ENCODE measurements at regions of chr17 and their contacts with region 1.

Region 1: GRCh38 chr17:37339321-37339720 is 36.5 kb upstream of the C17orf78 start:
- DNase-seq: no peak
- H3K4me3 ChIP-seq: no peak overlapping the region
- H3K27ac ChIP-seq: no peak overlapping the region
- H3K4me1 ChIP-seq: no peaks in the 10 kb centered on the region
- H3K27me3 ChIP-seq: no peaks in the 10 kb centered on the region
- CTCF ChIP-seq: no peak

Region 2: GRCh38 chr17:37310940-37311339 is 28.4 kb before region 1 on chr17:
- CTCF ChIA-PET with region 1: no interaction called
- POLR2A ChIA-PET with region 1: interaction called, 12 read pairs
- intact Hi-C with region 1: no loop called
- DNase-seq: no peak
- H3K4me3 ChIP-seq: no peak overlapping the region
- H3K27ac ChIP-seq: no peak overlapping the region
- H3K4me1 ChIP-seq: no peaks in the 10 kb centered on the region
- H3K27me3 ChIP-seq: no peaks in the 10 kb centered on the region
- CTCF ChIP-seq: no peak

Region 3: DNA sequence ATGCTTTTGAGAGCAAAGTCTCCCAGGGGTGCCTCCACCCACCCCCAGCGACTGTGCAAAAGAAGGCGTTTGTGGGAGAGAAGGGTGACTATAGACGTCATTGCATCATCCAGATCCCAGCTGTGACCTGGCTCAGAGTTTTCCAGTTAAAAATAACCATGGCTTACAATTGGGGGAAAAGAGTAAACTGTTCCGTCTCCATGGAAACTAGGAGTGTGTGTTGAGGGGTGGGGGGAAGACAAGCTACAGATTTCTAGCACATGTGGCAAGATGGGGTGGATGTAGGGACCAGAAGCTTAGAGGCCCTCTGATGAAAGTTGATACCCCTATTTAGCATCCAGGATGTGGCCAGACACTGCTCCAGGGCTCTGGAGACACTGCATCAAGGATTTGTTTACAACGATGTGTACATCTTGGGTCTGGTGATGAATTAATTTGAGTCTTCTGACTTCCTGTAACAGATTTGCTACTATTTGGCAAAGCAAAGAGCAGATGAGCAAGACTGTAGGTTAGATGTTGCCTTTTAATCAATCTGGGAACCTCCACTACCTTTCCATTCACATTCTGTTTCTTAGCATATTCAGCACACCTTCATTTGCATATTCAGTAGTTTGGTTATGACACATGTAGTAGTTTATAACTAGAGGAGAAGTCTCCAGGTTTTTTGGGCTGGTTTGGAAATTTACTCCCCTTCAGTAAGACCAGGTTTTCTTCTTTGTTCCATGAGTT is 144.2 kb after region 1 on chr17:
- CTCF ChIA-PET with region 1: no interaction called
- POLR2A ChIA-PET with region 1: no interaction called
- intact Hi-C with region 1: no loop called
- DNase-seq: peak in 1 of 2 experiments; percentile 35
- H3K4me3 ChIP-seq: no peak overlapping the region
- H3K27ac ChIP-seq: peak overlapping the region; percentile 13
- H3K4me1 ChIP-seq: peaks cover 32% of the 10 kb centered on the region
- H3K27me3 ChIP-seq: no peaks in the 10 kb centered on the region
- CTCF ChIP-seq: no peak